GM12878 (cell line): ENCODE measurements at regions of chr6 and their contacts with region 1.

Region 1: DNA sequence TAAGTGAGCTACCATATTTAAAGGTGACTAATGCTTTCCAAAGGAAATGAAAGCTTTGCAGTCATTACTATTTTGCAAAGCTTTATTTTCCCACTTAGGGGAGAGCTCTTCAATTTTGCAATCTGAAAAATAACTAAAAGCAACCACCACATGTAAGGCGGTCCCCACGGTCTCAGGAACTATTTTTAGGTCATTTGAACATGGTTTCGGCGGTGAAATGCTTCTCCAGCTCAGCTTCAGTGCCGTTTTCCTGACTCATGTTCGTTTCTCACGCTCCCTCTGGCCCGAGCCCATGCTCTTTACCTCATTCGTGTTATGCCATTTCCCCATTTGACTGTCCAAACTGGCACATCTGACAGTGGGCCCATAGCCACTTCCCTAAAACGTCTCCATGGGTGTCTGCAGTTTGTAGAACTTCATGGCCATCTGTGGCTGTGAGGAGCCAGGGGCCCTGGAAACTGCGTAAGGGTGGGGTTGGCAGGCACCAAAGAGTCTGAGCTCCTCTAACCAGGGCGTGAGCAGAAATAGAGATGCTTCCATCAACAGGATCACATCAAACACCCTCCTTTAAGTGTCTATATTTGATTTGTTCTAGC is 46.5 kb downstream of the ADTRP start:
- DNase-seq: peak; percentile 99
- ATAC-seq: peak; percentile 87
- H3K4me3 ChIP-seq: no peak overlapping the region
- H3K27ac ChIP-seq: peak overlapping the region; percentile 89
- H3K4me1 ChIP-seq: peaks cover 43% of the 10 kb centered on the region
- H3K27me3 ChIP-seq: no peaks in the 10 kb centered on the region
- CTCF ChIP-seq: no peak
- EP300 ChIP-seq: peak; percentile 86 to 94
- POLR2A ChIP-seq: peak; percentile 56
- RAD21 ChIP-seq: peak; percentile 47

Region 2: GRCh38 chr6:11445146-11445545 is 287.0 kb before region 1 on chr6:
- CTCF ChIA-PET with region 1: no interaction called
- POLR2A ChIA-PET with region 1: no interaction called
- RAD21 ChIA-PET with region 1: no interaction called
- SMC1A ChIA-PET with region 1: no interaction called
- in situ Hi-C with region 1: no loop called
- intact Hi-C with region 1: no loop called
- DNase-seq: no peak
- ATAC-seq: peak; percentile 23
- H3K4me3 ChIP-seq: no peak overlapping the region
- H3K27ac ChIP-seq: peak overlapping the region; percentile 27
- H3K4me1 ChIP-seq: peaks cover 3% of the 10 kb centered on the region; the same call in 1 of the 2 replicates
- H3K27me3 ChIP-seq: no peaks in the 10 kb centered on the region
- CTCF ChIP-seq: no peak
- EP300 ChIP-seq: no peak
- POLR2A ChIP-seq: no peak
- RAD21 ChIP-seq: no peak

Region 3: GRCh38 chr6:11537229-11538051 is 194.7 kb before region 1 on chr6 and contains the start of gene TMEM170B:
- CTCF ChIA-PET with region 1: no interaction called
- POLR2A ChIA-PET with region 1: no interaction called
- RAD21 ChIA-PET with region 1: no interaction called
- SMC1A ChIA-PET with region 1: no interaction called
- in situ Hi-C with region 1: no loop called
- intact Hi-C with region 1: no loop called
- DNase-seq: peak; percentile 82
- ATAC-seq: peak; percentile 98
- H3K4me3 ChIP-seq: peak within 1 kb of the TSS; percentile 96
- H3K27ac ChIP-seq: peak within 1 kb of the TSS; percentile 69
- H3K4me1 ChIP-seq: no peaks in the 10 kb centered on the region; the same call in 1 of the 2 replicates
- H3K27me3 ChIP-seq: no peaks in the 10 kb centered on the region
- CTCF ChIP-seq: no peak
- EP300 ChIP-seq: 0 out of 4 replicates have a peak, but pooled peaks of 1 of the 2 experiments have one; percentile 5
- POLR2A ChIP-seq: peak; percentile 78
- RAD21 ChIP-seq: no peak
- polyA plus RNA-seq, gene TMEM170B: 1.6 to 1.8 TPM

Region 4: GRCh38 chr6:11744753-11745152 is 12.6 kb after region 1 on chr6:
- CTCF ChIA-PET with region 1: interaction called, 8 read pairs
- POLR2A ChIA-PET with region 1: no interaction called
- RAD21 ChIA-PET with region 1: interaction called, 4 read pairs
- SMC1A ChIA-PET with region 1: interaction called, 10 read pairs
- in situ Hi-C with region 1: no loop called
- intact Hi-C with region 1: no loop called
- DNase-seq: no peak
- ATAC-seq: no peak; the same call in 2 of the 3 replicates
- H3K4me3 ChIP-seq: no peak overlapping the region
- H3K27ac ChIP-seq: no peak overlapping the region
- H3K4me1 ChIP-seq: no peaks in the 10 kb centered on the region
- H3K27me3 ChIP-seq: no peaks in the 10 kb centered on the region
- CTCF ChIP-seq: no peak
- EP300 ChIP-seq: no peak
- POLR2A ChIP-seq: no peak
- RAD21 ChIP-seq: no peak

Region 5: GRCh38 chr6:11778648-11779328 is 46.7 kb after region 1 on chr6 and contains the start of gene ADTRP:
- CTCF ChIA-PET with region 1: interaction called, 4 read pairs
- POLR2A ChIA-PET with region 1: interaction called, 3 read pairs
- RAD21 ChIA-PET with region 1: interaction called, 3 read pairs
- SMC1A ChIA-PET with region 1: interaction called, 13 read pairs
- in situ Hi-C with region 1: no loop called
- intact Hi-C with region 1: no loop called
- DNase-seq: no peak
- ATAC-seq: no peak
- H3K4me3 ChIP-seq: no peak within 1 kb of the TSS
- H3K27ac ChIP-seq: no peak within 1 kb of the TSS
- H3K4me1 ChIP-seq: no peaks in the 10 kb centered on the region
- H3K27me3 ChIP-seq: no peaks in the 10 kb centered on the region
- CTCF ChIP-seq: no peak
- EP300 ChIP-seq: no peak
- POLR2A ChIP-seq: no peak
- RAD21 ChIP-seq: no peak
- polyA plus RNA-seq, gene ADTRP: 2.5 to 2.6 TPM

Region 6: GRCh38 chr6:11815231-11815630 is 83.1 kb after region 1 on chr6:
- CTCF ChIA-PET with region 1: no interaction called
- POLR2A ChIA-PET with region 1: no interaction called
- RAD21 ChIA-PET with region 1: interaction called, 12 read pairs
- SMC1A ChIA-PET with region 1: interaction called, 5 read pairs
- in situ Hi-C with region 1: no loop called
- intact Hi-C with region 1: no loop called
- DNase-seq: no peak
- ATAC-seq: no peak
- H3K4me3 ChIP-seq: no peak overlapping the region
- H3K27ac ChIP-seq: no peak overlapping the region; the same call in 1 of the 2 replicates
- H3K4me1 ChIP-seq: peaks cover 15% of the 10 kb centered on the region; the same call in 1 of the 2 replicates
- H3K27me3 ChIP-seq: no peaks in the 10 kb centered on the region
- CTCF ChIP-seq: no peak
- EP300 ChIP-seq: no peak
- POLR2A ChIP-seq: no peak
- RAD21 ChIP-seq: no peak

Region 7: DNA sequence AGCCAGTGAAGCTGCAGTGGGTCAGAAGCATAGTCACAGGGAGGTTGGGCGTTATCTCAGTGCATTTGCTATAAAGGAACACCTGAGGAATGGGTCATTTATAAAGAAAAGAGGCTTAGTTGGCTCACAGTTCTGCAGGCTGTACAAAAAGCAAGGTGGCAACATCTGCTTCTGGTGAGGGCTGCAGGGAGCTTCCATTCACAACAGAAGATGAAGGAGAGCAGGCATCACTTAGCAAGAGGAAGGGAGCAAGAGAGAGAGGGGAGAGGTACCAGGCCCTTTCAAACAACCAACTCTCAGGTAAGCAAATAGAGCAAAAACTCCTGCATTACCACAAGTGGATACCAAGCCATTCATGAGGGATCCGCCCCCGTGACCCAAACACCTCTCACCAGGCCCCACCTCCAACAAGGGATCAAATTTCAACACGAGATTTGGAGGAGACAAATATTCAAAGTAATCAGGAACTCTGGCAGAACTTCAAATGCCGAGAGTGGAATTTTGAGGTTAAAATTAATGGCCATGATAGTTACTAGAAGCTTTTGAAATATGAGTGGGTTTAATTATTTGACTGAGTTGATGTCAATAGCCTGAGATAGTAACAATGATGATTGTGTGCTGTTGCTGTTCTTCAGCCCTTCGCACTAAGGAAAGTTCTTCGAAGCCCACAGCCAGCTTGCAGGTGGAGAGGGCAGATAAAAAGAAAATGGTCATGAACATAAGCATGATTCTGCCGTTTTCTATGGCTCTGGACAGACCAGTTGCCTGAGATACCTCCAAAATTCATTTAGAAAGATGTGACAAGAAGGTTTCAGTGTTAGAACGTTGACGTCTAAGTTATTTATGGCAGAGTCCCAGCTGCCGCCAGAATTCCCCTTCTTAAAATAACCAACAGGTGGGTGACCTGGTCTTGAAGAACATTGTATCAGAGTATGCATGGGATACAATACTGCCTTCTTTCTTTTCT is 101.8 kb after region 1 on chr6:
- CTCF ChIA-PET with region 1: interaction called, 3 read pairs
- POLR2A ChIA-PET with region 1: interaction called, 5 read pairs
- RAD21 ChIA-PET with region 1: interaction called, 38 read pairs
- SMC1A ChIA-PET with region 1: interaction called, 15 read pairs
- in situ Hi-C with region 1: no loop called
- intact Hi-C with region 1: loop called (anchors 2 kb)
- DNase-seq: peak; percentile 84
- ATAC-seq: peak; percentile 84
- H3K4me3 ChIP-seq: peak overlapping the region; percentile 0; the same call in 1 of the 2 replicates
- H3K27ac ChIP-seq: peak overlapping the region; percentile 95
- H3K4me1 ChIP-seq: peaks cover 45% of the 10 kb centered on the region
- H3K27me3 ChIP-seq: no peaks in the 10 kb centered on the region
- CTCF ChIP-seq: no peak
- EP300 ChIP-seq: peak; percentile 97 to 100
- POLR2A ChIP-seq: peak; percentile 41; the same call in 1 of the 2 replicates
- RAD21 ChIP-seq: peak; percentile 42; the same call in 1 of the 2 replicates

Region 8: DNA sequence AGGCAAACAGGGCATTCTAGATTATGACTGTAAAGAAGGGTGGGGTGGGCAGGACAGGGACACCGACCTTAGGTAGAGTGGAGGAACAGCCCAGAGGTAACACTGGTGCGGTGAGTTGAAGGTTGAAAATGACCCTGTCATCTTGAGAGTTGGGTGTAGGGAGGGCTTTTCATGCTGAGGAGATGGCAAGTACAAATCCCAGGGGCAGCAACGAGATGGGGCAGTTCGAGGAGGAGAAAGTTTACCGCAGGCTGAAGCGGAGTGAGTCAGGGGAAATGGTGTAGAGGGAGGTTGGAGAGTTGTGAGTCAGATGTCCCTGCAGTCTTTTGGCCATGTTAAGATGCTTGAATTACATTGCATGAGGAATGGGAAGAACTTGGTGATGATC is 381.1 kb after region 1 on chr6:
- CTCF ChIA-PET with region 1: interaction called, 3 read pairs
- POLR2A ChIA-PET with region 1: no interaction called
- RAD21 ChIA-PET with region 1: no interaction called
- SMC1A ChIA-PET with region 1: interaction called, 3 read pairs
- in situ Hi-C with region 1: no loop called
- intact Hi-C with region 1: loop called (anchors 1 kb)
- DNase-seq: no peak
- ATAC-seq: peak; percentile 60
- H3K4me3 ChIP-seq: peak overlapping the region; percentile 32; the same call in 1 of the 2 replicates
- H3K27ac ChIP-seq: peak overlapping the region; percentile 88
- H3K4me1 ChIP-seq: peaks cover 49% of the 10 kb centered on the region
- H3K27me3 ChIP-seq: no peaks in the 10 kb centered on the region
- CTCF ChIP-seq: no peak
- EP300 ChIP-seq: no peak
- POLR2A ChIP-seq: peak; percentile 41; the same call in 1 of the 2 replicates
- RAD21 ChIP-seq: no peak